ENCODE measurements at regions of chr9 and their contacts with region 1.

Region 1: GRCh38 chr9:79477955-79478771 is 93.6 kb upstream of the TLE4 start:
- DNase-seq: peak; percentile 30
- H3K4me3 Mint-ChIP-seq: no peak overlapping the region
- H3K27ac Mint-ChIP-seq: no peak overlapping the region
- H3K4me1 Mint-ChIP-seq: peaks cover 3% of the 10 kb centered on the region
- H3K27me3 Mint-ChIP-seq: no peaks in the 10 kb centered on the region

Region 2: GRCh38 chr9:79428422-79428821 is 49.7 kb before region 1 on chr9:
- CTCF ChIA-PET with region 1: no interaction called
- POLR2A ChIA-PET with region 1: no interaction called
- intact Hi-C with region 1: no loop called
- DNase-seq: no peak
- H3K4me3 Mint-ChIP-seq: no peak overlapping the region
- H3K27ac Mint-ChIP-seq: no peak overlapping the region
- H3K4me1 Mint-ChIP-seq: no peaks in the 10 kb centered on the region
- H3K27me3 Mint-ChIP-seq: peaks cover 5% of the 10 kb centered on the region

Region 3: GRCh38 chr9:79600466-79600865 is 122.3 kb after region 1 on chr9:
- CTCF ChIA-PET with region 1: no interaction called
- POLR2A ChIA-PET with region 1: no interaction called
- intact Hi-C with region 1: no loop called
- DNase-seq: no peak
- H3K4me3 Mint-ChIP-seq: no peak overlapping the region
- H3K27ac Mint-ChIP-seq: no peak overlapping the region
- H3K4me1 Mint-ChIP-seq: peaks cover 47% of the 10 kb centered on the region
- H3K27me3 Mint-ChIP-seq: no peaks in the 10 kb centered on the region

Region 4: DNA sequence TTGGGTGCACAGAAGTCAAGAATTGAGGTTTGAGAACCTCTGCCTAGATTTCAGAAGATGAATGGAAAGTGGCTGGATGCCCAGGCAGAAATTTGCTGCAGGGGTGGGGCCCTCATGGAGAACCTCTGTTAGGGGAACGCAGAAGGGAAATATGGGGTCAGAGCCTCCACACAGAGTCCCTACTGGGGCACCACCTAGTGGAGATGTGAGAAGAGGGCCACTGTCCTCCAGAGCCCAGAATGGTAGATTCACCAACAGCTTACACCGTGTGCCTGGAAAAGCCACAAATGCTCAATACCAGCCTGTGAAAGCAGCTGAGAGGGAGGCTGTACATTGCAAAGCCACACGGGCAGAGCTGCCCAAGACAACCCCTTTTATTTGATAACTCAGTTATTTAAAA is 477.1 kb after region 1 on chr9:
- CTCF ChIA-PET with region 1: no interaction called
- POLR2A ChIA-PET with region 1: no interaction called
- intact Hi-C with region 1: loop called (anchors 10 kb)
- DNase-seq: peak; percentile 10
- H3K4me3 Mint-ChIP-seq: no peak overlapping the region
- H3K27ac Mint-ChIP-seq: no peak overlapping the region
- H3K4me1 Mint-ChIP-seq: no peaks in the 10 kb centered on the region
- H3K27me3 Mint-ChIP-seq: peaks cover 2% of the 10 kb centered on the region

Measured in activated CD4-positive, alpha-beta memory T cell treated with anti-CD3 and anti-CD28 coated beads for 36 hours (primary cell).